Breast epithelium (tissue), 4 donors: ENCODE measurements at regions of chrX and their contacts with region 1.

Region 1: DNA sequence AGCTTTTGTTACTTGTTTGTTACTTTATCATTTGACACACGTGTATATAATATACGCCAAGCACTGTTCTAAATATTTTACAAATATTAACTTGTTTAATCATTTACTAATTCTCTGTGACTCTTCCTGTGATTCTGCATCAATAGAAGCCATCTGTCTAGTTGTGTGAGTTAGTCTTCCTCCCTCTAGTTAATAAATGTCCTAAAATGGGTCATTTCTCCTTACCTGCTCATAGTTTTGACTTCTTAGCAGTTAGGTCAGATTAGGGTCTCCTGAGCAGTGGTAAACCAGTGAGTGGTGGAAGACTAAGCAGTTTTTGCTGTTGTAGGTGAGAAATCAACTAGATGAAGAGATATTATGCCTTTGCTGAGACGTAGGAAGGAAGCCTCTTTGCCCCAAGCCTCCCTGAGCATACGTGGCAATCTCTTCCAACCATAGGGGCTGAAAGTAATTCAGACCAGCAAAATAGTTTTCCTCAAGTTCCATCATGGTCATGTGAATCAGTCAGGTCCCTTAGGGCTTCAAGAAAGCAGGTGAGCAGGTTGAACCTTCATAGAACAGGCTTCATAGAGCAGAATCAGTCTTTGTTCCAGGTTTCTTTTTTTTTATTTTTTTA is 38.7 kb upstream of the THOC2 start:
- DNase-seq: no peak
- H3K4me3 ChIP-seq: no peak overlapping the region
- H3K27ac ChIP-seq: no peak overlapping the region
- H3K4me1 ChIP-seq: no peaks in the 10 kb centered on the region
- H3K27me3 ChIP-seq: no peaks in the 10 kb centered on the region
- CTCF ChIP-seq: no peak
- POLR2A ChIP-seq: no peak

Region 2: DNA sequence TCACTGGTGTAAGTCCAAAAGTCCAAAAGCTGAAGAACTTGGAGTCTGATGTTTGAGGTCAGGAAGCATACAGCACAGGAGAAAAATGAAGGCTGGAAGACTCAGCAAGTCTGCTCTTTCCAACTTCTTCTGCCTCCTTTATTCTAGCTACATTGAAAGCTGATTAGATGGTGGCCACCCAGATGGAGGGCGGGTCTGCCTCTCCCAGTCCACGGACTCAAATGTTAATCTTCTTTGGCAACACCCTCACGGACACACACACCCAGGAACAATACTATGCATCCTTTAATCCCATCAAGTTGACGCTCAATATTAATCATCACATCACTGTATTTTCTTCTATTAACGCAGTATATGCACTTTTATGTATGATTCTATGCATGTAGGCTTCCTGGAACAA is 1519.1 kb before region 1 on chrX:
- intact Hi-C with region 1: loop called (anchors 10 kb)
- DNase-seq: no peak
- H3K4me3 ChIP-seq: no peak overlapping the region
- H3K27ac ChIP-seq: no peak overlapping the region
- H3K4me1 ChIP-seq: no peaks in the 10 kb centered on the region
- H3K27me3 ChIP-seq: no peaks in the 10 kb centered on the region
- CTCF ChIP-seq: no peak
- POLR2A ChIP-seq: no peak

Region 3: GRCh38 chrX:122906726-122907125 is 864.8 kb before region 1 on chrX:
- intact Hi-C with region 1: no loop called
- DNase-seq: no peak
- H3K4me3 ChIP-seq: no peak overlapping the region
- H3K27ac ChIP-seq: no peak overlapping the region
- H3K4me1 ChIP-seq: no peaks in the 10 kb centered on the region
- H3K27me3 ChIP-seq: no peaks in the 10 kb centered on the region
- CTCF ChIP-seq: no peak
- POLR2A ChIP-seq: no peak

Region 4: GRCh38 chrX:125507119-125507518 is 1735.6 kb after region 1 on chrX:
- intact Hi-C with region 1: no loop called
- DNase-seq: no peak
- H3K4me3 ChIP-seq: no peak overlapping the region
- H3K27ac ChIP-seq: no peak overlapping the region
- H3K4me1 ChIP-seq: no peaks in the 10 kb centered on the region
- H3K27me3 ChIP-seq: peaks cover 0 to 3% of the 10 kb centered on the region in 2 donors
- CTCF ChIP-seq: no peak
- POLR2A ChIP-seq: no peak